ENCODE measurements at regions of chr12 and their contacts with region 1.

Region 1: DNA sequence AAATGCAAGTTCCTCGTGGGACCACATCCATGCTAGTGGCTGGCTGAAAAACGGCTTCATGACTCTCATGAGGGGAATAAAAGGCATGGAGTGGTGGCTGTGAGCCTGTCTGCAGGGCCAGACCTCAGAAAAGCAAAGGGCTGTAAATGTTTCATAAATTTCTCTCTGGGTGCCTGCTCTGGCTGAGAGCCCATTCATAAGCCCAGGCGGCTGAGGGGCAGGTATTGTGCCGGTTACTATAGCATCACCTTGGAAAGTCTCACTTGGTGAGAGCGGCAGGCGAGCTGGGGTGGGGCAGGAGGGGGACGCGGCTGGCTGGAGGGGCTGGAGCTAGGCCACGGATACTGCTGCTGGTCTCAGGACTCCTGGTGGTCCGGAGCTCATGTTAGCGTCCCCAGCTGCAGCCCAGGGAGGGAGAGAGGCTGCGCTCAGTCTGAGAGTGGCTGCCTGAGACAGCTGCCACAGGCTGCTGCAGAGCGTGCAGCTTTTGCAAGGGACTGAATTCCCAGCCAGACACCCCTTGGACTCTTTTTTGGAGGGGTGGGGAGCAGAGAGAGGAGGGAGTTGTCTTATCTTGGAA is at the start of gene SLC17A8:
- DNase-seq: no peak
- H3K4me3 ChIP-seq: no peak within 1 kb of the TSS
- H3K27ac ChIP-seq: no peak within 1 kb of the TSS
- H3K4me1 ChIP-seq: no peaks in the 10 kb centered on the region
- H3K27me3 ChIP-seq: no peaks in the 10 kb centered on the region
- CTCF ChIP-seq: no peak
- total RNA-seq, gene SLC17A8: not detected

Region 2: DNA sequence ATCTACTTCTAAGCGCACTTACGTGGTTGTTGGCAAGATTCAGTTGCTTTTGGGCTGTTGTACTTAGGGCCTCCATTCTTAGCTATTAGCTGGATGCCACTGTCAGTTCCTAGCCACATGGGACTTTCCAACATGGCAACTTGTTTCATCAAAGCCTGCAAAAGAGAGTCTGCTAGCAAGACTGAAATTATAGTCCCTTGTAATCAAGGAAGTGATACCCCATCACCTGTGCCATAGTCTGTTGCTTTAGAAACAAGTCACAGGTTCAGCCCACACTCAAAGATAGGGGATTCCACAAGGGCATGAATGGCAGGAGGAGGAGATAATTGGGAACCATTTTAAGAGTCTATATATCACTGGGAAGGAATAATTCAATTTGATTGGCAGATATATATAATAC is 26.9 kb before region 1 on chr12:
- CTCF ChIA-PET with region 1: no interaction called
- dilution Hi-C with region 1: loop called (anchors 5 kb)
- in situ Hi-C with region 1: no loop called
- intact Hi-C with region 1: no loop called
- DNase-seq: no peak
- H3K4me3 ChIP-seq: no peak overlapping the region
- H3K27ac ChIP-seq: no peak overlapping the region
- H3K4me1 ChIP-seq: no peaks in the 10 kb centered on the region
- H3K27me3 ChIP-seq: no peaks in the 10 kb centered on the region
- CTCF ChIP-seq: no peak

Region 3: GRCh38 chr12:100404769-100405407 is 48.2 kb after region 1 on chr12:
- CTCF ChIA-PET with region 1: no interaction called
- dilution Hi-C with region 1: no loop called
- in situ Hi-C with region 1: no loop called
- intact Hi-C with region 1: loop called (anchors 10 kb)
- DNase-seq: peak; percentile 10
- H3K4me3 ChIP-seq: no peak overlapping the region
- H3K27ac ChIP-seq: no peak overlapping the region
- H3K4me1 ChIP-seq: no peaks in the 10 kb centered on the region
- H3K27me3 ChIP-seq: no peaks in the 10 kb centered on the region
- CTCF ChIP-seq: peak; percentile 33 to 46

Region 4: DNA sequence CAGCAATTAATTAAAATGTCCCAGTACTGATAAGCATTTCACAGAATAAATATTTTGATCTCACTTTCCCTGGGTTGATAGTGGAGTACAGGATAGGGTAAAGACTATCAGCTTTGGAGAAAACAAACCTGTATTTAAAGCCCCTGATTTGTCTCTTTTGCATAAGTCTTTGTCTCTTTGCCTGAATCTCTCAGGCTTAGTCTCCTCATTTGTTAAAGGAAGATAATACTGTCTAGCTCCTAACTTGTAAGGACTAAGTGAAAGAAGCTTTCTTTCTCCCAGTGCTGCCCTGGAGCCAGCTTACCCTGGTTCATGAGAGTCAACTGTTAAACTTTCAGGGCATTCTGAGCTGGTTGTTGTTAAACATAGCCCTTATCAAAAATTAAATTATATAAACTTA is 111.4 kb after region 1 on chr12:
- CTCF ChIA-PET with region 1: no interaction called
- dilution Hi-C with region 1: loop called (anchors 5 kb)
- in situ Hi-C with region 1: no loop called
- intact Hi-C with region 1: no loop called
- DNase-seq: no peak
- H3K4me3 ChIP-seq: no peak overlapping the region
- H3K27ac ChIP-seq: no peak overlapping the region
- H3K4me1 ChIP-seq: no peaks in the 10 kb centered on the region
- H3K27me3 ChIP-seq: no peaks in the 10 kb centered on the region
- CTCF ChIP-seq: no peak

Region 5: GRCh38 chr12:100554608-100555077 is 197.9 kb after region 1 on chr12:
- CTCF ChIA-PET with region 1: no interaction called
- dilution Hi-C with region 1: no loop called
- in situ Hi-C with region 1: loop called (anchors 10 to 25 kb)
- intact Hi-C with region 1: no loop called
- DNase-seq: peak; percentile 70
- H3K4me3 ChIP-seq: no peak overlapping the region
- H3K27ac ChIP-seq: no peak overlapping the region
- H3K4me1 ChIP-seq: no peaks in the 10 kb centered on the region
- H3K27me3 ChIP-seq: no peaks in the 10 kb centered on the region
- CTCF ChIP-seq: peak; percentile 82 to 94

Region 6: DNA sequence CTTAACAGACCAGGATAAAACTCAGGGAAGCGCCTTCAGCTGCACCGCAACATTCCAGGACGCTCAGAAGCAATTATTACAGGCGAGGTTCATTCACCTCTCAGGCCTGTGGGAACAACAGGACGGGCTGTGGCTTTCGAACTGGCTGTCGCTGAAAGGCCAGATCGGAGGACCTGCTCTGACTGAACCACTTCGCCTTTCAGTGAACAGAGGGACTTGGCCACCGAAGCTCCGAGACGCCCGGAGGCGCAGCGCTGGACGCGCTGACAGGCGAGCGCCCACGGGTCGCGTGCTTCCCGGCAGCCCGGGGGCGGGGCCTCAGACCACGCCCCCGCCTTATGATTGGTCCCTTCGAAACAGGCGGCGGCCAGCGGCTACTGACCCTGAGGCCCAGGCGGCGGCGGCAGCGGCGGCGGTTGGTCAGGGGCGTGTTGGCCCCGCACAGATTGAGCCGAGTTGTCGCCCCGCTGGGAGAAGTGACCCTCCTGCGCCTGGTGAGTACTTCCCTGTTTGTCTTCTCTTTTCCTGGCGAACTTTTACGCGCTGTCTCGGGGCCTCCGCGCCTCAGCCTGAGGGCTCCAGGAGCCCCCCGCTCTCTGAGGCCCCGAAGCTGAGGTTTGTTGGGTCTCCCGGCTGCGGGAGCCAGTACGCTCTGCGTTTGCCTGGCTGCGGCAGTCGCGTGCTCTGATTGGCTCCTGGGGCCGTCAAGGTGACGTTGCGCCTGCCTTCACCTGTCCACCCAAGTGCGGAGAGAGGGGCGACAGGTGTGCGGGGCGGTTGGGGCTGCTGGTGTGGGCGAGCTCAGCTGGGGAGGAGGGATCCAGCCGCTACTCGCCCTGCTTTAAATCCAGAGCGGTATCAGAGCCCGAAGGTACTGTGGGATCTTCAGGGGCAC is 216.8 kb after region 1 on chr12 and contains the start of gene GAS2L3:
- CTCF ChIA-PET with region 1: no interaction called
- dilution Hi-C with region 1: no loop called
- in situ Hi-C with region 1: loop called in 1 of 2 experiments (anchors 25 kb)
- intact Hi-C with region 1: no loop called
- DNase-seq: peak; percentile 82
- H3K4me3 ChIP-seq: peak within 1 kb of the TSS; percentile 71 to 92 (median 74)
- H3K27ac ChIP-seq: peak within 1 kb of the TSS; percentile 82
- H3K4me1 ChIP-seq: peaks cover 10% of the 10 kb centered on the region
- H3K27me3 ChIP-seq: no peaks in the 10 kb centered on the region
- CTCF ChIP-seq: no peak
- total RNA-seq, gene GAS2L3: 4.0 to 17.7 TPM

Region 7: DNA sequence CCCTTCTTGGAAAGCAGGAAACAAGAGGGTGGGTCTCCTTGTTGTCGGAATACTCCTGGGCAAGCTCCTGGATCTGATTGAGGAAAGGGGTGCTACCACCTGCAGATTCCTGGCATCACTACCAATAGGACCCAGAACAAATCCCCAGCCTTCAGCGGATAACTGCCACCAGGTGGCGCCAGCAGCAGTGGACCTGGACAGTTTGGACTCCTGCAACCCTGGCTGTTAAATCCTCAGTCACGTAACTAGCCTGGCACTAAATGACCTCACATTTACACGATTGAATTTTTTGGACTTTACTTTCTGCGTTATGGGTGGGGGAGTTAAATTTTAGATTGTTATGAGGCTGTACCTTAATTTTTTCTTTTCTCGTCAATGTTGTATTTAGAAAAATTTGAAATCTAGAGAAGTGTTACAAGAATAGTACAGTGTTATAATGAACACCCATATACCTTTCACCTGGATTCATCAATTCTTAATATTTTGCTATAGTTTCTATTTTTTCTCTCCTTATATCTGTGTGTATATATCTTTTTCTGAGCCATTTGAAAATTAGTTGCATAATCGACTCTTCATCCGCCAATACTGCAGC is 312.3 kb after region 1 on chr12:
- CTCF ChIA-PET with region 1: no interaction called
- dilution Hi-C with region 1: no loop called
- in situ Hi-C with region 1: loop called in 1 of 2 experiments (anchors 25 kb)
- intact Hi-C with region 1: no loop called
- DNase-seq: peak; percentile 56
- H3K4me3 ChIP-seq: no peak overlapping the region
- H3K27ac ChIP-seq: no peak overlapping the region
- H3K4me1 ChIP-seq: no peaks in the 10 kb centered on the region
- H3K27me3 ChIP-seq: no peaks in the 10 kb centered on the region
- CTCF ChIP-seq: peak; percentile 82 to 96